A673 (cell line): ENCODE measurements at regions of chr12 and their contacts with region 1.

Region 1: DNA sequence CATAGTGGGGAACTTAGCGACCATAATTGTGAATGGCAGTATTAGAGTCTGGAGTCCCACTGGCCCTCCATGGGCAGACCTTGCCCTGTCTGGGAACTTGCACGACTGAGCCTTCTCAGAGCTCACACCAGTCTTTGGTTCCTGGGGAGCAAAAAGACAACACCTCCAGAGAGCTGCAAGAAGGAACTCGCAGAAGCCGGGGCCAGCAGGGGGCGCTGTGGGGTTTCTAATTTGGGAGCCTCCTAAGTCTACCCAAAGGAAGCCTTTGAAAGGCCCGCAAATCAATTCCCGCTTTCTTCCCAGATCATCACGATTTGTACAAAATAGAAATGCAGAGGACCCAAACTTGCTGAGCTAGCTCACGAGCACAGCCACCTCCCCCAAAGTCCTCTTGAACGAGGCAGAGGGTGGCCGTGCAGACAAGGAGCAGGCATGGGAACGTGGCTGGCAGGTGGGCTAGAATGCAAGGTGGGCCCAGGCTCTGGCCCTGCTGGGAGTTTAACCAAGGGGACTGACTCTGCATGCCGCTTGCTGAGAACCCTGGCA is 46.3 kb upstream of the FBXO21 start:
- DNase-seq: peak; percentile 86
- H3K4me3 ChIP-seq: no peak overlapping the region
- H3K27ac ChIP-seq: no peak overlapping the region
- H3K4me1 ChIP-seq: peaks cover 10% of the 10 kb centered on the region
- H3K27me3 ChIP-seq: no peaks in the 10 kb centered on the region
- CTCF ChIP-seq: peak; percentile 93

Region 2: GRCh38 chr12:117360551-117361346 is 124.2 kb after region 1 on chr12:
- CTCF ChIA-PET with region 1: no interaction called
- POLR2A ChIA-PET with region 1: no interaction called
- intact Hi-C with region 1: loop called (anchors 2 kb)
- DNase-seq: peak; percentile 36
- H3K4me3 ChIP-seq: peak overlapping the region; percentile 66
- H3K27ac ChIP-seq: peak overlapping the region; percentile 80
- H3K4me1 ChIP-seq: peaks cover 18% of the 10 kb centered on the region
- H3K27me3 ChIP-seq: peaks cover 17% of the 10 kb centered on the region
- CTCF ChIP-seq: no peak

Region 3: DNA sequence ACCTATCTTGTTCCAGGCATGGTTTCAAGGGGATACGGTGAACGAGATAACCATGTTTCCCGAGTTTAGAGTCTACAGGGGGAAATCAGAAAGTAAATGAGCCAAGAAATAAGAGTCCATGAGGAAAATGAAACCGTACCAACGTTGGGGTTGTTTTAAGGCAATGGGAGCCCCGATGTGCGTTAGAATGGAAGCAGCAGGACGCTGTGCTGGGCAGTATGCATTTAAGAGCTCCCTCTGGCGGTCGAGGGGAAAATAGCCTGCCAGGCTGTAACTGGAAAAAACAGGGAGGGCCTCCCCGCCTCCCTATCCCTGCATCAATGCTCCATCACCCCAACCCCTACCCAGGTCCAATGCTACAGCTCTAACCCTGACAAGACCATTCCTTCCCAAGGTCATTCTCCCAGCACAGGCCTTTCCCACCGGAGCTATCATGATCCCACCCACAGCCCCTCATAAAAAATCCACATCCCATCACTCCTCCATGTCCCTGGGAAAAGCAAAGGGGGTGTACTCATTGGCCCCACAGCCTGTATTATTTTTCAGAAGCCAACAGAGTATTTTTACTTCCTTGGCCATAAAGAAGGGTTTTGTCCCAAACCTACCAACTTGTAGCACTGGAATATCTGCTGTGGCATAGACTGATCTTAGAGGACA is 351.2 kb after region 1 on chr12:
- CTCF ChIA-PET with region 1: interaction called, 8 read pairs
- POLR2A ChIA-PET with region 1: no interaction called
- intact Hi-C with region 1: loop called (anchors 1 kb)
- DNase-seq: peak; percentile 63
- H3K4me3 ChIP-seq: no peak overlapping the region
- H3K27ac ChIP-seq: no peak overlapping the region
- H3K4me1 ChIP-seq: no peaks in the 10 kb centered on the region
- H3K27me3 ChIP-seq: peaks cover 22% of the 10 kb centered on the region
- CTCF ChIP-seq: peak; percentile 87

Region 4: GRCh38 chr12:117671734-117672133 is 435.2 kb after region 1 on chr12:
- CTCF ChIA-PET with region 1: interaction called, 5 read pairs
- POLR2A ChIA-PET with region 1: no interaction called
- intact Hi-C with region 1: loop called (anchors 5 kb)
- DNase-seq: peak; percentile 70
- H3K4me3 ChIP-seq: no peak overlapping the region
- H3K27ac ChIP-seq: no peak overlapping the region
- H3K4me1 ChIP-seq: no peaks in the 10 kb centered on the region
- H3K27me3 ChIP-seq: peaks cover 33% of the 10 kb centered on the region
- CTCF ChIP-seq: peak; percentile 79

Region 5: GRCh38 chr12:117836999-117837736 is 600.6 kb after region 1 on chr12:
- CTCF ChIA-PET with region 1: interaction called, 3 read pairs
- POLR2A ChIA-PET with region 1: no interaction called
- intact Hi-C with region 1: loop called (anchors 1 kb)
- DNase-seq: peak; percentile 82
- H3K4me3 ChIP-seq: no peak overlapping the region
- H3K27ac ChIP-seq: no peak overlapping the region
- H3K4me1 ChIP-seq: no peaks in the 10 kb centered on the region
- H3K27me3 ChIP-seq: peaks cover 34% of the 10 kb centered on the region
- CTCF ChIP-seq: peak; percentile 99